HEK293 (cell line): ENCODE measurements at regions of chr6 and their contacts with region 1.

Region 1: DNA sequence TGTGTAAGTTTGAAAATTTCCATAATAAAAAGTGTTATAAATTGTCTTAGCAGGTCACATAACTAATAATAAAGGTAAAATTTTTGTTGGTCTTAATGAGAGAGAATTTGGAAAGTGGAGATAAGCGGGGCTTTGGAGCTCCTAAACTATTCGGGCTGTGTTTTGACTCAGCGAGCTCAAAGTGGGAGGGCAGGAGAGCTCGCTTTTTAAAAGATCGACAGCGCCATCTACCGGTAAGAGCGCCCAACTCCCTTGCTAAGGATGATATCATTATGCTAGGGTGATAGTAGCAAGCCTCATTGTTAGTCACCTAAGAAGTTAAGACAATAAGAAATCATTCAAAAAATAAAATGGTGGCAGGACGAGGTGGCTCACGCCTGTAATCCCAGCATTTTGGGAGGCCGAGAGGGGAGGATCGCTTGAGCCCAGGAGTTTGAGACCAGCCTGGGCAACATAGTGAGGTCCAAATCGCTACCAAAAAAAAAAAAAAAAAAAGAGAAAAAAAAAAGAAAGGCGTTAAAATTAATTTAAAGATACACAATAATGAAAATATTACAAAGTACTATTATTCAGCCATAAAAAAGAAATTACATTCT is 24.8 kb downstream of the C6orf15 start:
- H3K4me3 ChIP-seq: no peak overlapping the region
- H3K27ac ChIP-seq: no peak overlapping the region
- H3K4me1 ChIP-seq: peaks cover 10% of the 10 kb centered on the region; the same call in 1 of the 2 replicates
- CTCF ChIP-seq: peak; percentile 56

Region 2: GRCh38 chr6:30541515-30542403 is 545.8 kb before region 1 on chr6:
- CTCF ChIA-PET with region 1: interaction called, 41 read pairs
- POLR2A ChIA-PET with region 1: no interaction called
- H3K4me3 ChIP-seq: peak overlapping the region; percentile 34
- H3K27ac ChIP-seq: no peak overlapping the region
- H3K4me1 ChIP-seq: no peaks in the 10 kb centered on the region
- CTCF ChIP-seq: peak; percentile 79

Region 3: GRCh38 chr6:30836431-30836866 is 251.1 kb before region 1 on chr6:
- CTCF ChIA-PET with region 1: interaction called, 111 read pairs
- POLR2A ChIA-PET with region 1: interaction called, 4 read pairs
- H3K4me3 ChIP-seq: no peak overlapping the region
- H3K27ac ChIP-seq: no peak overlapping the region
- H3K4me1 ChIP-seq: peaks cover 9% of the 10 kb centered on the region; the same call in 1 of the 2 replicates
- CTCF ChIP-seq: no peak

Region 4: GRCh38 chr6:30907758-30908591 is 179.6 kb before region 1 on chr6 and contains the start of gene GTF2H4:
- CTCF ChIA-PET with region 1: interaction called, 206 read pairs
- POLR2A ChIA-PET with region 1: no interaction called
- H3K4me3 ChIP-seq: peak within 1 kb of the TSS; percentile 91
- H3K27ac ChIP-seq: peak within 1 kb of the TSS; percentile 61
- H3K4me1 ChIP-seq: no peaks in the 10 kb centered on the region; the same call in 1 of the 2 replicates
- CTCF ChIP-seq: peak; percentile 52; the same call in 1 of the 2 replicates

Region 5: GRCh38 chr6:31068669-31069340 is 18.8 kb before region 1 on chr6:
- CTCF ChIA-PET with region 1: interaction called, 102 read pairs
- POLR2A ChIA-PET with region 1: no interaction called
- H3K4me3 ChIP-seq: no peak overlapping the region
- H3K27ac ChIP-seq: no peak overlapping the region
- H3K4me1 ChIP-seq: peaks cover 17% of the 10 kb centered on the region
- CTCF ChIP-seq: peak; percentile 75

Region 6: DNA sequence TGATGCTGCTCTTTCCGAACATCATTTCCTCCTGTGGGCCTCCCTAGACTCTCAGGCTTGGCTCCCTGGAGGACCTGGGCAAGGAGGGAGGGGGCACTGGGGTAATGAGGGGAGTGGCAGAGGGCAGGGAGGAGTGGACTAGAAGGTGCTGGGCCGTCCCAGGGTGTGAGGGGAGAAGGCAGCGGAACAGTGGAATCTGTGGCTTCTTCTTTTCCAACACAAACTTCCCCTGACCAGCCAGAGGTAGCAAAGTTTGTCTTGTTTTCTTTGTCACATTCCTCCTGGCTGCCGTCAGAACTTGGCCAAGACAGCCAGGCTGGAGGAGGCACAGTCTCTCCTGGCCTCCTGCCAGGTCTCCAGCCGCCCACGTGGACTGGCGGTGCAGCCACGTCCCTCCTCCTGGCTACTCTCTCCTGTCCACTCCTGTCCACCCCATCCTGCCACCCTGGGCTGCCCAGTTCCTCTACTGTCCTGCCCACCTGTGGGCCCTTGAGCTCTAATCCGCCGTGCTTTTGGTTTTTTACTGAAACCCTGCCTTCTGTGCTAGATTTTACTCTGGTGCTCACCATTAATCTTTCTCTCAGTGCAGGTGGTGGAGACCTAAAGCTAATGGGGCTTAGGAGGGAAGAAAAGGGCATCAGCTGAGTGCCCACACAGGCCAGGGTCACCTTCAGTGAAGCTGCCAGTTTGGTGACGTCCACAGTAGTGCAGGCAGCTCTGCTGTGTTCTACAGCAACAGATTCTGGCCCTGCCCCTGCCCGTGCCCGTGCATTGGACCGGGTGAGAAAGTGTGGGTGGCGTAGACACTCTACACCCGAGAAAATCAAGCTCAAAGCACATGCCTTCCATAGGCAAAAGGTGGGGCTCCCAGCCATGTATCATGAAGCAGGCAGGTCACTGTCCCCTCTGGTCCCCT is 35.5 kb after region 1 on chr6:
- CTCF ChIA-PET with region 1: interaction called, 54 read pairs
- POLR2A ChIA-PET with region 1: no interaction called
- H3K4me3 ChIP-seq: no peak overlapping the region
- H3K27ac ChIP-seq: no peak overlapping the region
- H3K4me1 ChIP-seq: peaks cover 10% of the 10 kb centered on the region
- CTCF ChIP-seq: no peak

Region 7: DNA sequence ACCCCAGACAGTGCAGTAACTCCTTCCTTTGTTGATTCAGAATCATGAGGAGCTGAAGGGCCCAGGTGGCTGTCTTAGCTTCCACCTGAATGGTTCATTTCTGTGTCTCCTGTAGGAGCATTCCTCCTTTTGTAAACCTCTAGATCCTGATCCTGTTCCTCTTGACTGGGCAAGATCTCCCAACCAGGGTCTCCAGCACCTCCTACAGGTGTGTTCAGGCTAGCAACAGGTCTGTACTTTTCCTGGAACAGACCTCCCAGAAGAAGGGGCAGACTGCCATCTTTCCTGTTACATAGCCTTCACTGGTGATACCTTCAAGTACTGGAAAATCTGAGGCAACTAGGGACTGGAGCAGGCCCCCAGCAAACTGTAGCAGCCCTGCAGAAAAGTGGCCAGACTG is 234.2 kb after region 1 on chr6:
- CTCF ChIA-PET with region 1: no interaction called
- POLR2A ChIA-PET with region 1: no interaction called
- H3K4me3 ChIP-seq: no peak overlapping the region
- H3K27ac ChIP-seq: no peak overlapping the region
- H3K4me1 ChIP-seq: no peaks in the 10 kb centered on the region
- CTCF ChIP-seq: no peak